Caco-2 (cell line): ENCODE measurements at regions of chr12 and their contacts with region 1.

Region 1: DNA sequence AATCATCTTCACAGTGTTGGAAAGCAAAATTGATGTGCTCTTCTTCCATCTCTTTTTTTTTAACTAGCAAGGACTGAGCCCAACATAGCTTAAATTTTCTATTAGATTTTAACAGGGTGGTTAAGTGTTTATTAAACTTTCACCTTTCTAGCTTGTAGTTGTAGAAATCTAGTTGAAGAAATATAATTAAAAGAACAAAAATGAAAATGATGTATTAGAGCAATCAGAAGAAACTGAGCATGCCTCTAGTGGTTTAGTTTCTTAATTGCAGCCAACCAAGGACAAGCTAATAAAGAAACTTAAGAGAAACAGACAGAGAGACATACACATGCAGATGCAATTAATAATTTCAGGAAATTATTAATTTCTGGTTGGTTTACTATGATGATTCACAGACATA is 673.0 kb upstream of the LMO3 start:
- DNase-seq: no peak
- H3K4me3 ChIP-seq: no peak overlapping the region
- H3K4me3 Mint-ChIP-seq: no peak overlapping the region
- H3K27ac Mint-ChIP-seq: no peak overlapping the region
- H3K4me1 ChIP-seq: peaks cover 7% of the 10 kb centered on the region; the same call in 1 of the 2 replicates
- H3K4me1 Mint-ChIP-seq: peaks cover 3% of the 10 kb centered on the region
- H3K27me3 ChIP-seq: no peaks in the 10 kb centered on the region
- H3K27me3 Mint-ChIP-seq: no peaks in the 10 kb centered on the region
- CTCF ChIP-seq: peak; percentile 53 to 54

Region 2: DNA sequence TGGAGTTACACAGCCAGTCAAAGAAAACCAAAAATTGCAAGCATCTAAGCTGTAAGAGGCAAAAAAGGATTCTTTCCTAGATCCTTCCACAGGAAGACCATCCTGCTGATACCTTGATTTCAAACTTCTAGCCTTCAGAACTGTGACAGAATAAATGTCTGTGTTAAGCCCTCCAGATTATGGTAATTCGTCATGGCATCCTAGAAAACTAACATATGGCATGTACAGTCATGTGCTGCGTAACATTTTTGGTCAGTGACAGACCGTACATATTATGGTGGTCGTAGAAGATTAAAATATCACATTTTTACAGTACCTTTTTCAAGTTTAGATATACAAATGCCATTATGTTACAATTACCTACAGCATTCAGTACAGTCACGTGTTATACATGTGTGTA is 12.1 kb before region 1 on chr12:
- CTCF ChIA-PET with region 1: interaction called, 10 read pairs
- POLR2A ChIA-PET with region 1: no interaction called
- intact Hi-C with region 1: no loop called
- DNase-seq: no peak
- H3K4me3 ChIP-seq: no peak overlapping the region
- H3K4me3 Mint-ChIP-seq: no peak overlapping the region
- H3K27ac Mint-ChIP-seq: no peak overlapping the region
- H3K4me1 ChIP-seq: no peaks in the 10 kb centered on the region
- H3K4me1 Mint-ChIP-seq: no peaks in the 10 kb centered on the region
- H3K27me3 ChIP-seq: no peaks in the 10 kb centered on the region
- H3K27me3 Mint-ChIP-seq: no peaks in the 10 kb centered on the region
- CTCF ChIP-seq: no peak

Region 3: GRCh38 chr12:17326649-17327048 is 47.7 kb after region 1 on chr12:
- CTCF ChIA-PET with region 1: no interaction called
- POLR2A ChIA-PET with region 1: no interaction called
- intact Hi-C with region 1: loop called (anchors 5 kb)
- DNase-seq: peak; percentile 44 to 71
- H3K4me3 ChIP-seq: no peak overlapping the region
- H3K4me3 Mint-ChIP-seq: no peak overlapping the region
- H3K27ac Mint-ChIP-seq: no peak overlapping the region
- H3K4me1 ChIP-seq: peaks cover 20% of the 10 kb centered on the region
- H3K4me1 Mint-ChIP-seq: peaks cover 15% of the 10 kb centered on the region
- H3K27me3 ChIP-seq: no peaks in the 10 kb centered on the region
- H3K27me3 Mint-ChIP-seq: no peaks in the 10 kb centered on the region
- CTCF ChIP-seq: no peak